WTC11 (cell line): ENCODE measurements at regions of chr7 and their contacts with region 1.

Region 1: DNA sequence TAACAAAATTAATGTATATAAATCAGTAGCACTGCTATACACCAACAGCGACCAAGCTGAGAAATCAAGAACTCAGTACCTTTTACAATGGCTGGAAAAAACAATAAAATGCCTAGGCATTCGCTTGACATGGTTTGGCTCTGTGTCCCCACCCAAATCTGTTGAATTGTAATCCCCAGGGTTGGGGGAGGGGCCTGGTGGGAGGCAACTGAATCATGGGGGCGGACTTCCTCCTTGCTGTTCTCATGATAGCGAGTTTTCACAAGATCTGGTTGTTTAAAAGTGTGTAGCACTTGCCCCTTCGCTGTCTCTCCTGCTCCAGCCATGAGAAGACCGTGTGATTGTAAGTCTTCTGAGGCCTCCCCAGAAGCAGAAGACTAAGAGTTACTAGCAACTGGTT is 8.6 kb downstream of the ZNF786 start:
- DNase-seq: no peak
- ATAC-seq: 0 out of 2 replicates have a peak, but pooled peaks have one; percentile 41
- H3K4me3 Mint-ChIP-seq: no peak overlapping the region
- H3K27ac Mint-ChIP-seq: peak overlapping the region; percentile 72
- H3K4me1 Mint-ChIP-seq: peaks cover 7% of the 10 kb centered on the region
- H3K27me3 Mint-ChIP-seq: no peaks in the 10 kb centered on the region
- CTCF ChIP-seq: no peak

Region 2: GRCh38 chr7:149036676-149037075 is 45.2 kb before region 1 on chr7:
- CTCF ChIA-PET with region 1: no interaction called
- POLR2A ChIA-PET with region 1: no interaction called
- DNase-seq: no peak
- ATAC-seq: no peak
- H3K4me3 Mint-ChIP-seq: no peak overlapping the region
- H3K27ac Mint-ChIP-seq: no peak overlapping the region
- H3K4me1 Mint-ChIP-seq: no peaks in the 10 kb centered on the region
- H3K27me3 Mint-ChIP-seq: peaks cover 13% of the 10 kb centered on the region
- CTCF ChIP-seq: no peak

Region 3: GRCh38 chr7:149050941-149051340 is 31.0 kb before region 1 on chr7:
- CTCF ChIA-PET with region 1: no interaction called
- POLR2A ChIA-PET with region 1: interaction called, 10 read pairs
- DNase-seq: no peak
- ATAC-seq: no peak
- H3K4me3 Mint-ChIP-seq: no peak overlapping the region
- H3K27ac Mint-ChIP-seq: no peak overlapping the region
- H3K4me1 Mint-ChIP-seq: no peaks in the 10 kb centered on the region
- H3K27me3 Mint-ChIP-seq: no peaks in the 10 kb centered on the region; the same call in 1 of the 2 replicates
- CTCF ChIP-seq: no peak